ENCODE measurements at regions of chr10 and their contacts with region 1.

Region 1: DNA sequence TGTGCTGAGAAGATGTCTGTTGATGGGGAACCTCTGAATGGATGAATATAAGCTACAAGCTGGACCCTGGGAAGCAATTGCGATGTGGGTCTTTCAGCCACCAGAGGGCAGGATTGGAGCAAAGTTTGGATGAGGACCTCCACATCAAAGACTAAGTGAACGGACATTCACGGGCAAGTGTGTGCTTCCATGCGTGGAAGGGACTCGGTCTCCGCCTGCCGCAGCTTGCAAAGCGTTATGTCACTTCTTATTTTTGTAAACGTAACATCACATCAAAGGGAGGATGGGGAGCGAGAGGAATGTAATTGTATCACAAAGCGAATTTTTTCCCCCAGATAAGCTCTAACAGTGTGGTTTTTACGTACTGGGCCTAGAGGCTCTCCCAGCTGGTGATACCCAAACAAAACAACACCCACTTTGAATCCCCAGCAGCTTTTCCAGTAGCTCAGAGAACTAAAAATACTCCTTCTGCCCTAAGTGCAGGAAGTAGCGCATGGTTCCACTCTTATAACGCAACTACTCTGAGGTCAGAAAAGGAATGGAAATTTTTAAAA is 65.0 kb downstream of the VWA2 start:
- DNase-seq: peak; percentile 88
- ATAC-seq: peak; percentile 73
- H3K4me3 ChIP-seq: peak overlapping the region; percentile 3; the same call in 1 of the 2 replicates
- H3K27ac ChIP-seq: no peak overlapping the region
- H3K4me1 ChIP-seq: peaks cover 10% of the 10 kb centered on the region
- H3K27me3 ChIP-seq: peaks cover 9% of the 10 kb centered on the region
- CTCF ChIP-seq: peak; percentile 86
- POLR2A ChIP-seq: no peak
- RAD21 ChIP-seq: peak; percentile 81

Region 2: GRCh38 chr10:114432566-114433093 is 128.5 kb after region 1 on chr10:
- CTCF ChIA-PET with region 1: interaction called, 17 read pairs
- POLR2A ChIA-PET with region 1: interaction called, 3 read pairs
- dilution Hi-C with region 1: no loop called
- in situ Hi-C with region 1: no loop called
- intact Hi-C with region 1: loop called (anchors 1 kb)
- DNase-seq: peak; percentile 59
- ATAC-seq: peak; percentile 69
- H3K4me3 ChIP-seq: no peak overlapping the region
- H3K27ac ChIP-seq: no peak overlapping the region
- H3K4me1 ChIP-seq: peaks cover 4% of the 10 kb centered on the region; the same call in 1 of the 2 replicates
- H3K27me3 ChIP-seq: peaks cover 8% of the 10 kb centered on the region
- CTCF ChIP-seq: no peak
- POLR2A ChIP-seq: no peak
- RAD21 ChIP-seq: no peak

Region 3: DNA sequence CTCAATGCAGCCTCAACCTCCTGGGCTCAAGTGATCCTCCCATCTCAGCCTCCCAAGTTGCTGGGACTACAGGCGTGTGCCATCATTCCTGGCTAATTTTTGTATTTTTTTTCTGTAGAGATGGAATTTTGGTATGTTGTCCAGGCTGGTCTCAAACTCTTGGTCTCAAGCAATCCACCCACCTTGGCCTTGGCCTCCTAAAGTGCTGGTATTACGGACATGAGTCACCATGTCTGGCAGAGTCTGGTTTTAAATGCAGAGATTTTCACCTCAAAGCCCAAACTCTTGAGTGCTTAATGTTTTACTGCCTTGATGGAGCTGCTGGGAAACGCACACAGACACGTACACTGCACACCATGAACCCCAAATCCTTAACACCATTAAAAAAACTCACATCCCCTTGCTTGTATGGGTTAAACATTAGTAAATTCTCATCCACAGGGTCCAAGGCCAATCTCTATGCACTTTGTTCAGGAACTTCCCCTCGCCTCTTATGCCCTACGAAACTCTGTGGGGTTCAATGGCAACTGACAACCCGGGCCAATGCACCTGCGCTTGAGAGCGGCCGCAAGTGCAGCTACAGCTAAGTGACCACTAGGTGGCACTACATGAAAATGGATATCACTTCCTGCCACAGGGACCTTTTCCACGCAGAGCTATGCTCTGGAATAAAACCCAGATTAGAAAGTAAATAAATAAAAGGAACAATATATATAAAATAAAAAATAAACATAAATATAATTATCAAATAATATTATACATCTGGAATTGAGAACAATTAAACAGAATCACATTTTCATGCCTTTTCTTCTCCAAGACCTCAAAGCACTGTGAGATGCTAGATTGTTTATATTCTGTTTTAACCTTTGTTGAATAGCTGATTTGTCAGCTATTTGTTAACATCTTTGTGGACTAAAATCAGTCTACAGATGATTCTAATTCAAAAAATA is 167.1 kb after region 1 on chr10:
- CTCF ChIA-PET with region 1: interaction called, 8 read pairs
- POLR2A ChIA-PET with region 1: no interaction called
- dilution Hi-C with region 1: no loop called
- in situ Hi-C with region 1: no loop called
- intact Hi-C with region 1: loop called (anchors 1 kb)
- DNase-seq: peak; percentile 77
- ATAC-seq: peak; percentile 98
- H3K4me3 ChIP-seq: no peak overlapping the region
- H3K27ac ChIP-seq: no peak overlapping the region
- H3K4me1 ChIP-seq: no peaks in the 10 kb centered on the region
- H3K27me3 ChIP-seq: peaks cover 2% of the 10 kb centered on the region; the same call in 1 of the 2 replicates
- CTCF ChIP-seq: peak; percentile 86
- POLR2A ChIP-seq: no peak
- RAD21 ChIP-seq: peak; percentile 83

Region 4: GRCh38 chr10:114550756-114551635 is 246.9 kb after region 1 on chr10:
- CTCF ChIA-PET with region 1: interaction called, 5 read pairs
- POLR2A ChIA-PET with region 1: no interaction called
- dilution Hi-C with region 1: no loop called
- in situ Hi-C with region 1: loop called (anchors 5 kb)
- intact Hi-C with region 1: loop called (anchors 1 kb)
- DNase-seq: peak; percentile 47
- ATAC-seq: peak; percentile 48
- H3K4me3 ChIP-seq: peak overlapping the region; percentile 16; the same call in 1 of the 2 replicates
- H3K27ac ChIP-seq: no peak overlapping the region
- H3K4me1 ChIP-seq: no peaks in the 10 kb centered on the region
- H3K27me3 ChIP-seq: peaks cover 8% of the 10 kb centered on the region
- CTCF ChIP-seq: peak; percentile 55
- POLR2A ChIP-seq: no peak
- RAD21 ChIP-seq: peak; percentile 51

Region 5: GRCh38 chr10:114703377-114704107 is 399.4 kb after region 1 on chr10:
- CTCF ChIA-PET with region 1: interaction called, 4 read pairs
- POLR2A ChIA-PET with region 1: no interaction called
- dilution Hi-C with region 1: no loop called
- in situ Hi-C with region 1: no loop called
- intact Hi-C with region 1: loop called (anchors 5 kb)
- DNase-seq: peak; percentile 43
- ATAC-seq: peak; percentile 70
- H3K4me3 ChIP-seq: no peak overlapping the region
- H3K27ac ChIP-seq: no peak overlapping the region
- H3K4me1 ChIP-seq: 0 out of 2 replicates have a peak, but pooled peaks cover 2% of the 10 kb centered on the region
- H3K27me3 ChIP-seq: no peaks in the 10 kb centered on the region; the same call in 1 of the 2 replicates
- CTCF ChIP-seq: peak; percentile 80
- POLR2A ChIP-seq: no peak
- RAD21 ChIP-seq: peak; percentile 91

Region 6: DNA sequence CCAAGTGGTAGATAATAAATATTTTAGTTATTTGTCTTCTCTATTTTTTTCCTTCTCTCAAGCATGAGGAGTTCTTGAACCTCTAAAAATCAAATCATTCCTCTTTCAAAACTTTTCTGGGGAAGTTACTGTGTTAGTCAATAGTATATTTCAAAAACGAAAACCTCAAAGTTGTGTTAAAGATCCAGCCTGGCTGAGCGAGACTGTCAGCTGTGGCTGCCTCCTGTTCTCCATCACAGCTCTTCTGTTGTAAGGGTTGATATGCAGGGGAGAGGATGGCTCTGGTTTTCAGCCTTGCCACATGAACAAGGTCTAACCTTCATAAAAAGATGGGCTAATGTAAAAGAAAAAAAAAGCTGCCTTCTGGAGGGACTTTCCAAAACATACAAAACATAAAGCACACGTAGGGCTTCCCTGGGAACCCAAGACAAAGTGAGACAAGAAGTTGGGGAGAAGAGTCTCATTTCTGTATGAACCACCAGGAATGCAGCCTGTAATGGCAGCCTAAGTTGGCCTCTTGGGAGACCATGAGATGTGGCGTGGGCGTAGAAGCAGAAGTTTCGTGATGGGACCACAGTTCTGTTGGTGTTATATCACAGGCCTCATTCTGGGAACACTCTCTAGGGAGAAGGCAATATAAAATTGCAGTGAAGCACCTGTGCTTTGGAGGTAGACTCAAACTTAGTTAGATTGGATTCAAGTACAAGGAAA is 439.6 kb after region 1 on chr10:
- CTCF ChIA-PET with region 1: no interaction called
- POLR2A ChIA-PET with region 1: no interaction called
- dilution Hi-C with region 1: no loop called
- in situ Hi-C with region 1: no loop called
- intact Hi-C with region 1: no loop called
- DNase-seq: no peak
- ATAC-seq: no peak
- H3K4me3 ChIP-seq: no peak overlapping the region
- H3K27ac ChIP-seq: no peak overlapping the region
- H3K4me1 ChIP-seq: no peaks in the 10 kb centered on the region
- H3K27me3 ChIP-seq: no peaks in the 10 kb centered on the region
- CTCF ChIP-seq: no peak
- POLR2A ChIP-seq: no peak
- RAD21 ChIP-seq: no peak

Region 7: GRCh38 chr10:114876602-114877300 is 572.7 kb after region 1 on chr10:
- CTCF ChIA-PET with region 1: no interaction called
- POLR2A ChIA-PET with region 1: no interaction called
- dilution Hi-C with region 1: no loop called
- in situ Hi-C with region 1: no loop called
- intact Hi-C with region 1: loop called (anchors 5 kb)
- DNase-seq: peak; percentile 58
- ATAC-seq: peak; percentile 88
- H3K4me3 ChIP-seq: no peak overlapping the region
- H3K27ac ChIP-seq: no peak overlapping the region
- H3K4me1 ChIP-seq: 0 out of 2 replicates have a peak, but pooled peaks cover 2% of the 10 kb centered on the region
- H3K27me3 ChIP-seq: no peaks in the 10 kb centered on the region
- CTCF ChIP-seq: peak; percentile 87
- POLR2A ChIP-seq: no peak
- RAD21 ChIP-seq: peak; percentile 91